Heart left ventricle (tissue), 16 donors: ENCODE measurements at regions of chr1 and their contacts with region 1.

Region 1: GRCh38 chr1:33080885-33081553 is at the start of gene AZIN2:
- DNase-seq: peak; percentile 96 to 99 (median 97)
- ATAC-seq: peak; percentile 93 to 99 (median 99)
- H3K4me3 ChIP-seq: peak within 1 kb of the TSS; percentile 49 to 97 (median 75)
- H3K27ac ChIP-seq: peak within 1 kb of the TSS in 9 of 12 donors; percentile 1 to 77 (median 58)
- H3K4me1 ChIP-seq: peaks cover 0 to 23% (median 16%) of the 10 kb centered on the region in 12 donors
- H3K27me3 ChIP-seq: peaks cover 0 to 7% (median 0%) of the 10 kb centered on the region in 9 donors
- CTCF ChIP-seq: no peak
- POLR2A ChIP-seq: peak; percentile 62 to 89
- total RNA-seq, gene AZIN2: 1.4 to 5.4 (median 3.1) TPM

Region 2: GRCh38 chr1:32400876-32401631 is 680.0 kb before region 1 on chr1:
- intact Hi-C with region 1: loop called in 1 of 10 experiments (anchors 10 kb)
- DNase-seq: peak; percentile 82 to 92 (median 88)
- ATAC-seq: peak; percentile 93 to 99 (median 98)
- H3K4me3 ChIP-seq: no peak overlapping the region
- H3K27ac ChIP-seq: peak overlapping the region in 10 of 12 donors; percentile 2 to 67 (median 42)
- H3K4me1 ChIP-seq: peaks cover 0 to 12% (median 0%) of the 10 kb centered on the region in 12 donors
- H3K27me3 ChIP-seq: no peaks in the 10 kb centered on the region
- CTCF ChIP-seq: peak; percentile 82 to 96 (median 88)
- POLR2A ChIP-seq: peak in 1 of 2 donors; percentile 12

Region 3: DNA sequence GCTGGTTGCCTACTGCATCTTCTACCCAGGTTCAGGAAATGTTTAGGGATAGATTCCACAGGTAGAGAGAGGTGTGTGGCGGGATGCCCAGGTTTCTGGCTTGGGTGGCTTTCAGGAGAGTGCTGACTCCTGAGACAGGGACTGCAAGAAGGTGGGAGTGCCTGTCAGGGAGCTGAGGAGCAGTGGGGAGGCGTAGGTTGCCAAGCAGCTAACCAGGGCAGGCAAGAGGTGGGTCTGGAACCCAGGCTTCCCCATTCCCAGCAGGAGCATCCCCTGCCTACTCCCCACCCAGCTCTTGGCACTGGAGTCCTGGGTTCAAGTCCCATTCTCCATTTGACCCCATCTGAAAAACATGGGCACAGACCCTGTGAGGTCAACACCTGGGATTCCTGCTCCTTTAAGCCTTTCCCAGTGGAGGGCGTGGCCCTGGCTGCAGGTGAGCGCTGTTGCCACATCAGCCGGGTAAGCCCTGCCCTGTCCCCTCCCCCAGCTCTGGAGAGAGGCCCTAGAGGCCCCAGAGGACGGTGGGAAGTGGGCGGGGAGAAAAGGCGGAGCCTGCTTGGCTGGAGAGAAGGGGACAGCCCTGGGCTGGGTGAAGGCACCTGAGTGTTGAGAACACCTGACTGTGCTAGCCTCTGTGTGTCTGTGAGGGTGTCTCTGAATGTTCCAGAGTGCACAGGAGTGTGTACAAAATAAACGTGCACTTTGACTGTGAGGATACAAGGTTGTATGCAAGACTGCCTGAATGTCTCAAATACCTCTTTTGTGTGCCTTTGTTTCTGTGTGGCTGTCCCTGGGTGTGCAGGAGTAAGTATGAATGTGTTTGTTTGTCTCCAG is 364.5 kb before region 1 on chr1:
- intact Hi-C with region 1: loop called in 4 of 10 experiments (anchors 5 to 10 kb)
- DNase-seq: peak in 4 of 5 donors; percentile 48 to 70 (median 61)
- ATAC-seq: peak; percentile 61 to 72 (median 68)
- H3K4me3 ChIP-seq: no peak overlapping the region
- H3K27ac ChIP-seq: no peak overlapping the region
- H3K4me1 ChIP-seq: peaks cover 0 to 10% (median 3%) of the 10 kb centered on the region in 12 donors
- H3K27me3 ChIP-seq: peaks cover 0 to 3% (median 0%) of the 10 kb centered on the region in 9 donors
- CTCF ChIP-seq: no peak
- POLR2A ChIP-seq: peak in 1 of 2 donors; percentile 16

Region 4: DNA sequence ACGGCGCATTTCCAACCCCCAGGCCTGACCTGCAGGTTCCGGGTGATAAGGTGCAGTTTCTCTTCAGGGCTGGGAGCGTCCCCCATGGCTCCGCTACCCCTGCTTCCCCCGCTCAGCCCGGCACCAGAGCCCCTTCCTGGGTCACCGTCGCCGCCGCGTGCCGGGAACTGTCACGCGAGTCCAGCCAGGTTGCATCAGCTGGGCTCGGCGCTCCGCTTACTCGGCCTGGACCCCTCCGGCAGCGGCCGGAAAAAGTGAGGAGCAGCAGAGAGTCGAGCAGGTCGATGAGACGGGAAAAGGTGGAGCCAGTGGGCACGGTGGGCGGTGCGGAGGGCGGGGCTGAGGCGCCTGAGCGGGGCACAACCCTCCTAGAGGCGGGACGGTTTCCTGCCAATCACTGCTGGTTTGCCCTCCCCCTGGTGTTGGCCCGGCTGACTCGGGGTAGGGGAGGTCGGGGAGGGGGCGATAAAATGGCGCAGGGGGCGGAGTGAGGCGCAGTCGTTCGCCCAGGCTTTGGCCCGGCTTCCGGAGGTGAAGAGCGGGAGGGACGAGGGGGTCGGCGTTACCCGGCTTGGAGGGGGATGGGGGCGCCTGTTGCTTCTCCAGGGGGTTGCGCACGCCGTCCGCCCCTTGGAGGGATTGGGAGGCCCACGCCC is 263.7 kb before region 1 on chr1 and contains the starts of genes S100PBP and YARS1:
- intact Hi-C with region 1: loop called in 1 of 10 experiments (anchors 10 kb)
- DNase-seq: peak; percentile 99 to 100 (median 100)
- ATAC-seq: peak; percentile 97 to 99 (median 98)
- H3K4me3 ChIP-seq: peak within 1 kb of the TSS; percentile 76 to 99 (median 88)
- H3K27ac ChIP-seq: peak within 1 kb of the TSS; percentile 94 to 99 (median 98)
- H3K4me1 ChIP-seq: peaks cover 5 to 59% (median 31%) of the 10 kb centered on the region in 12 donors
- H3K27me3 ChIP-seq: no peaks in the 10 kb centered on the region
- CTCF ChIP-seq: peak in 3 of 12 donors; percentile 5 to 10 (median 10)
- POLR2A ChIP-seq: peak in 1 of 2 donors; percentile 64
- total RNA-seq, gene S100PBP: 9.1 to 21.2 (median 10.7) TPM
- total RNA-seq, gene YARS1: 20.2 to 58.1 (median 34.8) TPM

Region 5: GRCh38 chr1:32876341-32877210 is 204.4 kb before region 1 on chr1:
- intact Hi-C with region 1: loop called in 8 of 10 experiments (anchors 1 to 10 kb)
- DNase-seq: peak in 4 of 5 donors; percentile 55 to 80 (median 62)
- ATAC-seq: peak; percentile 16 to 69 (median 56)
- H3K4me3 ChIP-seq: no peak overlapping the region
- H3K27ac ChIP-seq: no peak overlapping the region
- H3K4me1 ChIP-seq: peaks cover 0 to 49% (median 16%) of the 10 kb centered on the region in 12 donors
- H3K27me3 ChIP-seq: peaks cover 0 to 12% (median 0%) of the 10 kb centered on the region in 9 donors
- CTCF ChIP-seq: peak; percentile 51 to 90 (median 82)
- POLR2A ChIP-seq: no peak

Region 6: DNA sequence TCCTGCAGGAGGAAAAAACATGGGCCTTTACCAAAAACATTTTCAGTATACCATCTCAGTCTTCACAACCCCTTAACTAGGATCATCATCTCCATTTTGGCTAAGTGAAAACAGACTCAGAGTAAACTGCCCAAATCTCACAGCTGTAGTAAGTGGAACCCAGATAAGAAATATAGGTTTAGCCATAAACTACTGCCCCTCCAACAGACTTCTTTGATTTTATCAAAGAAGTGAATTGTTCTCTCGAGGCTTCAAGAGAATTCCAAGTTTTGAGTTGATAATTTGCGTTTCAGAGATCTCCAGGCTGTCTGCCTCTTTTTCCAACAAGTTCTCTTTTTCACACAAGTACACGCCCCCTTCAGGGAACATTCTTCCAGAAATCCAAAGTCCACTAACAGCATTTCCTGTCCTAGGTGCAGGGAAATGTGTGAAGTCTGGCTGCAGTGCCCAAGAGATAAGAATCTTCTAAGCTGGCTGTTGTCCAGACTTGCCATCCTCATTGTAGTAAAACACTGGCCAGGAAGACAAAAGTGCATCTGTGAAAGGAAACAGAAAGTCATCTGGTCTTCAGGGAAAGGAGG is 147.2 kb before region 1 on chr1:
- intact Hi-C with region 1: loop called (anchors 1 to 10 kb)
- DNase-seq: peak in 1 of 5 donors; percentile 35
- ATAC-seq: peak in 3 of 4 donors; percentile 31 to 74 (median 63)
- H3K4me3 ChIP-seq: no peak overlapping the region
- H3K27ac ChIP-seq: peak overlapping the region in 9 of 12 donors; percentile 2 to 56 (median 45)
- H3K4me1 ChIP-seq: peaks cover 0 to 34% (median 11%) of the 10 kb centered on the region in 12 donors
- H3K27me3 ChIP-seq: no peaks in the 10 kb centered on the region
- CTCF ChIP-seq: peak in 1 of 12 donors; percentile 6
- POLR2A ChIP-seq: no peak

Region 7: GRCh38 chr1:32939655-32940371 is 141.2 kb before region 1 on chr1:
- intact Hi-C with region 1: loop called in 4 of 10 experiments (anchors 10 kb)
- DNase-seq: peak in 4 of 5 donors; percentile 64 to 80 (median 76)
- ATAC-seq: peak; percentile 63 to 95 (median 93)
- H3K4me3 ChIP-seq: no peak overlapping the region
- H3K27ac ChIP-seq: peak overlapping the region in 6 of 12 donors; percentile 12 to 63 (median 26)
- H3K4me1 ChIP-seq: peaks cover 0 to 52% (median 15%) of the 10 kb centered on the region in 12 donors
- H3K27me3 ChIP-seq: no peaks in the 10 kb centered on the region
- CTCF ChIP-seq: no peak
- POLR2A ChIP-seq: no peak

Region 8: GRCh38 chr1:33161061-33161681 is 80.2 kb after region 1 on chr1:
- intact Hi-C with region 1: no loop called
- DNase-seq: peak; percentile 72 to 83 (median 77)
- ATAC-seq: peak; percentile 56 to 86 (median 76)
- H3K4me3 ChIP-seq: no peak overlapping the region
- H3K27ac ChIP-seq: peak overlapping the region in 11 of 12 donors; percentile 12 to 69 (median 49)
- H3K4me1 ChIP-seq: peaks cover 0 to 32% (median 14%) of the 10 kb centered on the region in 12 donors
- H3K27me3 ChIP-seq: no peaks in the 10 kb centered on the region
- CTCF ChIP-seq: no peak
- POLR2A ChIP-seq: no peak